Activated T-helper 2 cell treated with anti-CD3 and anti-CD28 coated beads, Interferon-gamma antibody, Interleukin-2, Interleukin-4, amounts not matched to agents 10 μg/mL and 5 μg/mL and 100 μg/mL, durations not matched to agents 14 hours and 24 hours and 36 hours (primary cell): ENCODE measurements at regions of chr10 and their contacts with region 1.

Region 1: DNA sequence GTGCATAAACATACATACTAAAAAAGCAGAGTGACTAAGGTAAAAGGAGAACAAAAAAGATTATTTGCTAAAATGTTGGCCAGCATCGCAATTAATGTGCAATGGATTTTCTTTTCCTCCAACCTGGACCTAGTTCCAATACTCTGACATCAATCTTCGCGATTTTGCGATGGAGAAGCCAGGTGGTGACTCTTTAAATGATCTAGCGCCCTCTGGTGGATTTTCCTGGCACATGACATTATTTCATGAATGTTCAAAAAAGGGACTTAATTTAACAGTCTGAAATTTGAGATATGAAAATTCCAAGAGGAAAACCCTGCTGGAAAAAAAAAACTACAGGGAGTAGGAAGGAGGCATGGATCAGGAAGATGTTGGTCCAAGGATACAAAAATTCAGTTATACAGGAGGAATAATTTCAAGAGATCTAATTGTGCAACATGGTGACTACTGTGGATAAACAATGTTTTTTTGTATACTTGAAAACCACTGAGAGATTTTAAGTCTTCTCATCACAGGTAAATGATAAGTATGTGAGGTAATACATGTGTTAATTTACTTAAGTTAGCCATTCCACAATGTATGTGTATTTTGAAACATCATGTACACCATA is 4.3 kb upstream of the KCNMA1 start:
- DNase-seq: no peak
- H3K4me3 Mint-ChIP-seq: no peak overlapping the region
- H3K27ac Mint-ChIP-seq: no peak overlapping the region
- H3K4me1 Mint-ChIP-seq: peaks cover 2% of the 10 kb centered on the region
- H3K27me3 Mint-ChIP-seq: peaks cover 36% of the 10 kb centered on the region

Region 2: GRCh38 chr10:77165445-77166208 is 476.3 kb before region 1 on chr10:
- intact Hi-C with region 1: loop called (anchors 2 kb)
- DNase-seq: peak; percentile 10
- H3K4me3 Mint-ChIP-seq: no peak overlapping the region
- H3K27ac Mint-ChIP-seq: no peak overlapping the region
- H3K4me1 Mint-ChIP-seq: peaks cover 3% of the 10 kb centered on the region
- H3K27me3 Mint-ChIP-seq: peaks cover 19% of the 10 kb centered on the region

Region 3: GRCh38 chr10:77173615-77174461 is 468.1 kb before region 1 on chr10:
- intact Hi-C with region 1: loop called (anchors 1 kb)
- DNase-seq: peak; percentile 29
- H3K4me3 Mint-ChIP-seq: no peak overlapping the region
- H3K27ac Mint-ChIP-seq: no peak overlapping the region
- H3K4me1 Mint-ChIP-seq: no peaks in the 10 kb centered on the region
- H3K27me3 Mint-ChIP-seq: no peaks in the 10 kb centered on the region

Region 4: DNA sequence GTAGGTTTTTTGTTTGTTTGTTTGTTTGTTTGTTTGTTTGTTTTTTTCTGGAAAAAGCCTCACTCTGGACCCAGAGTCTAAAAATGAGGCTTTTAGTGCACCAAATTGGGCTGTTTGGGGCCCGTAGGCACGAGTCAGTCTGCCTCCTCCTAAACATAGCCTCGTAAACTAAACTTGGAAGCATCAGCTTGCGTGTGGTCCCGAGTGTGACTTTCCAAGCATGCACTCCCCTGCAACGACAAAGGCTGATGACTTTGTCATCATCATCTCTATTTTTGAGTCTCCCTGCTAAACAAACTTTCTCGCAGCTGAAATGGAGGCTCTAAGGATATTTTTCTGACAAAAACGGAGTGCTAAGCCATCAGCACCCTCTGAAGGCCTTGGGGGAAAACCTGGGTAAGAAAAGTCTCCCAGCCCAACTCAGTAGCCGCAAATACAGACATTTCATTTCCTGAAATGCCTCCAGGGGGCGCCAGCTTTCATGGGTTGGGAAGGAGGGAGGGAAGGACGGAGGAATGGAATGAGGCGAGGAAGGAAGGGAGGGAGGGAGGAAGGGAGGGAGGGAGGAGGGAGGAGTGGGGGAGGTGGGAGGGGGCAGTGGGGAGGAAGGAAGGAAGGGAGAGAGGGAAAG is 250.2 kb before region 1 on chr10:
- intact Hi-C with region 1: loop called (anchors 5 kb)
- DNase-seq: no peak
- H3K4me3 Mint-ChIP-seq: no peak overlapping the region
- H3K27ac Mint-ChIP-seq: no peak overlapping the region
- H3K4me1 Mint-ChIP-seq: peaks cover 3% of the 10 kb centered on the region
- H3K27me3 Mint-ChIP-seq: no peaks in the 10 kb centered on the region

Region 5: GRCh38 chr10:77609781-77610272 is 32.1 kb before region 1 on chr10:
- intact Hi-C with region 1: no loop called
- DNase-seq: no peak
- H3K4me3 Mint-ChIP-seq: no peak overlapping the region
- H3K27ac Mint-ChIP-seq: no peak overlapping the region
- H3K4me1 Mint-ChIP-seq: no peaks in the 10 kb centered on the region
- H3K27me3 Mint-ChIP-seq: peaks cover 4% of the 10 kb centered on the region

Region 6: DNA sequence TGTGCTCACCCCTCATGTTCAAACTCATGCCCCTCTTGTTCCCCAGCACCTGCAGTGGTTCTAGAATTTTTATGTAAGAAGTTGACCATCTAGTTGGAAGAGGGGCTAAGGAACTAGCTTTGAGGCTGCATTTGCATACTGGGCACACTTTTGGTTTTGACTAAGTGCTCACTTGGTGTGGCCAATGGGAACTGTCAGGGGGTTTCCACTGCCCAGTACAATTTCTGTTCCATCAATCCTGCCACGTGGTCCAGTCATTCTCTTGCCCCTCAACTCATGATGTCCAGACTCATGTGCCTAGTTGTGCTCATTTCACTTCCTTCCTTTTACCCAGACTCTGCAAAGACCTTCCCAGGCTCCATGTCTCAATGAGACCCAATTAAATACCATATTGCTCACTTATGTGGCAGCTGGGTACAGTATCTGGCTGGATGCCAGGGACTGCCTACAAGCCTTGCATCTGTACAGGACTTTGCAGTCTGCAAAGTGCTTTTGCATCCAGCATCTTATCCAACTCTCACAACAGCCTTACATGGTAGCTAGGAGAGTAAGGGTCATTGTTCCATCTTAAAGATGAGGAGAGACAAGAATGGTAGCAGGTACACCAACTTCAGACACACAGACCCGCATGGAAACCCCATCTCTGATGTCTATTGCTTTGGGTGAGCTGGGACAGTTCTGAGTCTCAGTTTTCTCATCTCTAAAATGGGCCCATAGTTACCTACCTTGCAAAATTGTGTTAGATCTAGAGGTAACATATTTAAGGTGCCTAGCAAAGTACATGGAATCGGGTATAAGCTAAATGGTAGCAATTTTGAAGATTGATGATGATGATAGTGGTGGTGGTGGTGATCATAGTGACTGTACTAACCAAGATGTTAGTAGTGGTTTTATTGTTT is 25.8 kb after region 1 on chr10:
- intact Hi-C with region 1: no loop called
- DNase-seq: no peak
- H3K4me3 Mint-ChIP-seq: no peak overlapping the region
- H3K27ac Mint-ChIP-seq: no peak overlapping the region
- H3K4me1 Mint-ChIP-seq: no peaks in the 10 kb centered on the region
- H3K27me3 Mint-ChIP-seq: no peaks in the 10 kb centered on the region

Region 7: DNA sequence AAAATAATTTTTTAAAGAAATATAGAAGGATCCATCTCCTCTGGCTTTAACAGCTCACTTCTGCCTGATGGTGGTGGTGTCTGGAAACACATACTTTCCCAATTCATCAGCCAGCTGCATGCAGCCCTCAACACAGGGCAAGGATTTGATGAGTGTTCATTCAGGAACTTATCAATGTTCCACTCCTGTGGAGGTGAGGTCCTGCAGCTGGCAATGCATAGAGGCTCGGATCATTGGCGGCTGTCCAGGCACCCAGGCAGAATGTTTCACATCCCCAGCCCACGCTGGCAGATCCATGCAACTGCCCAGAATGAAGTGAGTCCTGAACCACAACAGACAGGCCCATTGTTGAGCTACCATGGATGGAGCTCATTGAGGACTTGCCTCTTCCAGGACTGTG is 50.9 kb after region 1 on chr10:
- intact Hi-C with region 1: no loop called
- DNase-seq: no peak
- H3K4me3 Mint-ChIP-seq: no peak overlapping the region
- H3K27ac Mint-ChIP-seq: no peak overlapping the region
- H3K4me1 Mint-ChIP-seq: no peaks in the 10 kb centered on the region
- H3K27me3 Mint-ChIP-seq: peaks cover 10% of the 10 kb centered on the region

Region 8: GRCh38 chr10:77710759-77711682 is 69.1 kb after region 1 on chr10:
- intact Hi-C with region 1: no loop called
- DNase-seq: peak; percentile 60
- H3K4me3 Mint-ChIP-seq: peak overlapping the region; percentile 27
- H3K27ac Mint-ChIP-seq: no peak overlapping the region
- H3K4me1 Mint-ChIP-seq: peaks cover 6% of the 10 kb centered on the region
- H3K27me3 Mint-ChIP-seq: peaks cover 30% of the 10 kb centered on the region